ENCODE measurements at regions of chr6 and their contacts with region 1.

Region 1: DNA sequence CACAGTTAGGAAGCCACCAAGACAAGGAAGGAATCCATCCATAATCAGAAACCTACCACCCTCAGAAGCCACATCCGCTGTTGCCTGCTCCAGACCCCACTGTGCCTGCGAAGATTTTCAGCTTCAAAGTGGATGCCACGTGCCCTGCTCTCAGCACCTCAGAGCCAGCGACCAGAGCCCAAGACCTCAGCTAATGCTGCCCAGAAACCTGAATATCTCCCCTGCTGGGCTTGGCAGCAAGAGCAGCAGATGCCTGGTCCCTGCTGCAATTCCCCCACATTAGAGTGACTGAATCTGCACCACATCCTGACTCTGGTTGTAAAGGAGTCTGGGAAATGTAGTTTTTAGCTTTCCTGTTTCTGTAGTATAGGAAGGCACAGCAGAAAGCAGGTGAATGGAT is 10.7 kb upstream of the ULBP3 start:
- DNase-seq: peak; percentile 33
- H3K4me3 ChIP-seq: no peak overlapping the region
- H3K27ac ChIP-seq: no peak overlapping the region
- H3K4me1 ChIP-seq: no peaks in the 10 kb centered on the region
- H3K27me3 ChIP-seq: no peaks in the 10 kb centered on the region
- CTCF ChIP-seq: no peak

Region 2: DNA sequence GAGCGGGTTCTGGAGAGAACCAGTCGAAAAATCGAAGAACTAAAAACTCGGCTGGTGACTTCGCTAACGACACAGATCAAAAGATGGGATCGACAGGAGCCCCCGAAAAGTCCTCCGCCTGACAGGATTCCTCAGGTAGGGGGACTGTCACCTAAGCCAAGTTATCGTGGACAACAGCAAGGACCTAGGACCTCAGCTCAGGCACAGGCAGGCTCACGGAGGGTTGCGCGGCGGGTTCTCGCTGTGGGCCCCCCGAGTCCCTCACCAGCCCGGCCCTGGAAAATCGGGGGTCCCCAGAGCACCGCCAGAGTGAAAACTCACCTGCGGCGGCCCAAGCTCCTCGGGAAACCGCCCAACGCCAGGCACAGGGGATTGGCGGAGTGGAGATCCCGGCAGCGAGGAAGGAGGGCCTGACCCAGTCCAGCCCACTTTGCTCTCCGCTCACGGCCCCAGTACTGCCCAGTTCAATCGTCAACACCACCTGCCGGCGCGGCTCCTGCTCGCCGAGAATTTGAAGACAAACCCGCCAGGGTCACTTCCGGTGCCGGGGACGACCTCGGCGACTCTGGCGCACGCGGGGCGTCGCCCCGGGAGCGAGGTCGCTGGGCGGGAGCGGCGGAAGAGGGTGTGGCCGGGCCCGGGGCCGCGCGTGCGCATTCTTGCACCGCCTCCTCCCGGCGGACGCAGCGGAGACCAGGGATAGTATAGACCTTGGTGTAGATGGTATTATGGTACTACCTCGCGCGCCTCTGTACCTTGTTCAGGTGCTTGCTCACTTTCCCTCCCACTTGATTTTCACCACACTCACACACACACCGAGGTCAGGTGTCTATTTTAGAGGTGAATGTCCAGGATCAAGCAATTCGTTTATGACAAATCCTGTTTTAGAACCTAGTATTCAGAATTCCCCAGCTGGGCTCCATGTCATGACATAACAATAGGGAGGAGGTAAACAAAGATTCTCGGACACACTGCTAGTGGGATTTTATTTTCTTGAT is 431.2 kb before region 1 on chr6 and contains the start of gene KATNA1:
- CTCF ChIA-PET with region 1: no interaction called
- POLR2A ChIA-PET with region 1: no interaction called
- intact Hi-C with region 1: no loop called
- DNase-seq: peak; percentile 89
- H3K4me3 ChIP-seq: peak within 1 kb of the TSS; percentile 66
- H3K27ac ChIP-seq: peak within 1 kb of the TSS; percentile 70
- H3K4me1 ChIP-seq: peaks cover 15% of the 10 kb centered on the region
- H3K27me3 ChIP-seq: no peaks in the 10 kb centered on the region
- CTCF ChIP-seq: no peak
- total RNA-seq, gene KATNA1: 28.3 and 28.7 TPM in 2 replicates

Region 3: GRCh38 chr6:149834513-149835481 is 244.8 kb before region 1 on chr6:
- CTCF ChIA-PET with region 1: no interaction called
- POLR2A ChIA-PET with region 1: no interaction called
- intact Hi-C with region 1: no loop called
- DNase-seq: peak; percentile 75
- H3K4me3 ChIP-seq: no peak overlapping the region
- H3K27ac ChIP-seq: no peak overlapping the region
- H3K4me1 ChIP-seq: no peaks in the 10 kb centered on the region
- H3K27me3 ChIP-seq: no peaks in the 10 kb centered on the region
- CTCF ChIP-seq: peak; percentile 91

Region 4: GRCh38 chr6:150169609-150170008 is 90.0 kb after region 1 on chr6:
- CTCF ChIA-PET with region 1: interaction called, 10 read pairs
- POLR2A ChIA-PET with region 1: no interaction called
- intact Hi-C with region 1: no loop called
- DNase-seq: peak; percentile 53
- H3K4me3 ChIP-seq: no peak overlapping the region
- H3K27ac ChIP-seq: no peak overlapping the region
- H3K4me1 ChIP-seq: peaks cover 5% of the 10 kb centered on the region
- H3K27me3 ChIP-seq: no peaks in the 10 kb centered on the region
- CTCF ChIP-seq: no peak

Region 5: DNA sequence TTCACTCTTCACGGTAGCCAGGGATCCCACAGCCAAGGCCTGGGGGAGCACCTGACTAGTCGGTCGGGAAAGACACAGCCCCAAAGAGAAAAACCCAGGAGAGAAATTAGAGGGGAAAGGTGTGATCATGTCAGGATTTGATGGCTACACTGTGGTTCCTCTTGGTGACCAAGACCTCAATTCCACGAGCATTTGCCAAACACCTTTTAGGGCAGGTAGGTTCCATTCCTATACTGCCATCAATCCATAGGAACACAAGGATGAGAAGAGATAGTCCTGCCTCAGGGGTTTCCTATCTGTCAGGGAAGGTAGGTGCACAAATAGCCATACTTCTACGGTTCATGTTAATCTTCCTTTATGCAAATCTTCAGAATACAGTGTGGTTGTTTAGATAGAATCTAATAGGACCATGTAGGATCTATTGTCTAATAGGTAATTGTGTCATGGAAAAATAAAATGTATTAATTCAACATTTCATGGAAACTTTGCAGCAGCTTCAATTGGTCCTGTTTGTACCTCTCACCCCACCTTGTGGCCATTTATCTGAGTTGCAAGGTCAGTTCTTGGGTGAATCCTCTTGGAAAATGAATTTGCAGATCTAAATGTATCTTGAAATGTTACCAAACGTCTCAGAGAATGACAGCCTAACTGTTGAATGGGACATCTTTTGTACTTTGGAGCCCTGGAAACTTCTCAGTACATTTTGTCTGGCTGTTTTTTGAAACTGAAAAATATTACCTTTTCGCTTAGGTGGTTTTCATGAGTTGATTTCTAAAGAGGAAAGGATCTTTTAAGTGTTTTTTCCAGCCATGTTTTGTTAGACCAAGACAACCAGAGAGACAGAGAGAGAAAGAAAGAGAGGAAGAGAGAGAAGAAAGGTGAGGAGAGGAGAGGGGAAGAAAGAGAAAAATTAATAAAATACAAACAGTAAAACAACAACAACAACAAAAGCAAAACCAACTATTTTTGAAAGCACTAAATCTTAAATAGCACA is 255.5 kb after region 1 on chr6:
- CTCF ChIA-PET with region 1: interaction called, 14 read pairs
- POLR2A ChIA-PET with region 1: interaction called, 21 read pairs
- intact Hi-C with region 1: loop called (anchors 1 kb)
- DNase-seq: peak; percentile 73
- H3K4me3 ChIP-seq: no peak overlapping the region
- H3K27ac ChIP-seq: no peak overlapping the region
- H3K4me1 ChIP-seq: no peaks in the 10 kb centered on the region
- H3K27me3 ChIP-seq: no peaks in the 10 kb centered on the region
- CTCF ChIP-seq: peak; percentile 88

Region 6: DNA sequence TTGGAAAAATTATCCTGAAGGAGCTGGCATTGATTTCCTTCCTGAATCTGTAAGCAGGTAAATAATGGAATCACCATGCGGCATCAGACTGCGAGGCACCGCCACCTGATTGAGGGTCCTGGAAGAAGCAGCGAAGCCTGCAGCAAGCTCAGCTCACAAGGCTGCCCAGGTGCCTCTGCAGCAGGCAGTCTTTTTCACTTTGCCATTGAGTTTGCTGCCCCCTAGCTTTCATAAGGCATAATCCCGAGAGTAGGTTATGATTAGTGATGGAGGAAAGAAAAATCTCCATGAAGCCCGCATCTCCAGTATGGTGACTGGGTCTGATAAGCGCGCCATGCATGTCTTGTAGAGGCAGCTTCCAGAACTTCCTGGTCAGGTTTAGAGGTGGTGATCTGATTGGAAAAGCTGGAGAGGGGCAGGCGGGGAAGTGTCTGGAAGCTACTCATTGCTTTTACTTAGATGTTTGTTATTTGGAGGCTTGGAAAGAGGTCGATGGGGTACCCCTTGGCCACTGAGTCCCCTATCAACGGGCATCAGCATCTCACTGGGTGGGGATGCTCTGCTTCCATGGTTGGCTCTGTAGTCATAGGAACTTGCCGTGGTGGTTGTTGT is 315.9 kb after region 1 on chr6:
- CTCF ChIA-PET with region 1: interaction called, 22 read pairs
- POLR2A ChIA-PET with region 1: no interaction called
- intact Hi-C with region 1: loop called (anchors 2 kb)
- DNase-seq: peak; percentile 82
- H3K4me3 ChIP-seq: no peak overlapping the region
- H3K27ac ChIP-seq: no peak overlapping the region
- H3K4me1 ChIP-seq: no peaks in the 10 kb centered on the region
- H3K27me3 ChIP-seq: no peaks in the 10 kb centered on the region
- CTCF ChIP-seq: peak; percentile 77

Measured in A673 (cell line).